Left lung (tissue), 14 donors: ENCODE measurements at regions of chr5 and their contacts with region 1.

Region 1: DNA sequence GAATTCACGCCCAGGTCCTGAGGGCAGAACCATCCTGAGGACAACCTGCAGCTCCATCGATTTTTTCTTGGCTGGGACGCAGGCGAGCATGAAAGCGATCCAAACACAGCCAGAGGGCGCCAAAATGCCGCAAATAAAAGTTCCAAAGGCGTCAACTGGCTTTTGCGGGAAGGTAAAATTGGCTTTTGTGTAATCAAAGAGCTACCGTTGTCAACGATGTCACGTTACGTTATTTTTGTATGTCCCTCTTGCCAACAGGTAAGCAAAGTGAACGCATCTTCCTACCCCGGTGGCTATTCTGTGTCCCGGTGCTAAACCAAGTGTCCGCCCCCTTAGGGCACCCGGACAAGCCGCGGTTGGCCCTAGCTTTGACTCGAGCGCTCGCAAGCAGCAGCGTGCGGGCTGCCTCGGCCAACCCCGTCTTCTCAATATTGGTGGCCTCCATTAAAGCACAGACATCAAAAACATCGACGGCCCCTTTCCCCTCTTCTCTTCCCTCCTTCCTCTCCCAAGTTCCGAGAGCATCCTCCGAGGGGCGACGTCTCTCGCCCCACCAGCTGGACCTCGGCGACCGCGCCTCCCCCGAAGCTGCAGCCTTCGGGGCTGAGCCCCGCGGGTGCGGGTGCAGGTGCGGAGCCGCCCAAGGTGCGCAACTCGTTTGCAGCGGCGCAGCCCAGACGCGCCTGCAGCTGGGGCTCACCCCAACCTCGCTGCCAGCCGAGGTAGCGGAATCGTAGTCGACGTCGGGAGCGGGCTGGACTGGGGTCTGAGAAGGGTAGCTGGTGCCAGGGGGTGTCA is 1.1 kb upstream of the BASP1 start:
- DNase-seq: peak; percentile 81 to 89 (median 83)
- ATAC-seq: peak; percentile 73
- H3K4me3 ChIP-seq: peak overlapping the region; percentile 17 to 71
- H3K27ac ChIP-seq: peak overlapping the region in 1 of 2 donors; percentile 86
- H3K4me1 ChIP-seq: peaks cover 7 to 19% of the 10 kb centered on the region in 2 donors
- H3K27me3 ChIP-seq: peaks cover 0 to 39% of the 10 kb centered on the region in 2 donors
- CTCF ChIP-seq: peak; percentile 70 to 81

Region 2: DNA sequence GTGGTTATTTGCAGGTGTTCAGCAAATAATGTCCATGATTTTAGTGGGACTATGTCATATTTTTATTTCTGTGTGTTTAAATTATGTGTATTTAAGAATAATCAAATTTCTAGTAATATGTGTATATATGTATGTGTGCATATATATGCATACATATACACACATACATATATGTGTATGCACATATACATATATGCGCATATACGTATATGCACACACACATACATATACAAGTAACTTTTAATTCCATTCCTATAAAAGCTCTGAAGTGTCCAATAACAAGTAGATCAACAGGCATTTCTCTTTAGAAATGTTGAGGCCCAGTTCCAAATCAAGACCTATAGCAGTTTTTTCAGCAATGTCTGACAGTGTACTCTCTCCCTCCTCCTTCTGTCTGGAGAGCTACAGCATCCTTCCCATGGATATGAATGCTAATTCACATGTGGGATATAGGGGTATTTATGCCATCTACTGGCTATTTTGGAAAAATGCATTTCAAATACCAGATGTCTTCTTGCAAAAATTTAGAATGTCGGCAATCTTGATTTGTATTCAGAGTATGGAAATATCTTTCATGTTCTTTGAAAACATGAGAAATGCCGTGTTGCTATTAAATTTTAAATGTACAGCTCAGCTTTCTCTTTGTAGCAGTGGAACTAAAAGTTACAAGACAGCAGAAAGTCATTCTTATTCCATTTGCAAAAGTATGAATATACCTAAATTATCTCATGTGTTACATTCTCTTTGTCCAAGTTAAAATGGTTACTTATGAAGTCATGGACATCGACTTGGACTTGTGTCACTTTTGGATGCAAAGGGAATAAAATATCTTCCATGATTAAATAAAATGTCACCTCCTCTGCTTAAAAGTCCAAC is 1065.5 kb after region 1 on chr5:
- intact Hi-C with region 1: loop called in 1 of 2 experiments (anchors 10 kb)
- DNase-seq: peak in 2 of 4 donors; percentile 30 to 45
- ATAC-seq: peak; percentile 75
- H3K4me3 ChIP-seq: no peak overlapping the region
- H3K27ac ChIP-seq: no peak overlapping the region
- H3K4me1 ChIP-seq: no peaks in the 10 kb centered on the region
- H3K27me3 ChIP-seq: no peaks in the 10 kb centered on the region
- CTCF ChIP-seq: peak; percentile 29 to 32